IMR-90 (cell line): ENCODE measurements at regions of chr2 and their contacts with region 1.

Region 1: GRCh38 chr2:217713395-217714286 is 289.2 kb downstream of the TNS1 start:
- DNase-seq: peak; percentile 72
- ATAC-seq: peak; percentile 83
- H3K4me3 ChIP-seq: no peak overlapping the region
- H3K27ac ChIP-seq: peak overlapping the region; percentile 93
- H3K4me1 ChIP-seq: peaks cover 35% of the 10 kb centered on the region
- H3K27me3 ChIP-seq: no peaks in the 10 kb centered on the region
- CTCF ChIP-seq: peak; percentile 97
- POLR2A ChIP-seq: peak; percentile 54; the same call in 1 of the 2 replicates
- RAD21 ChIP-seq: peak; percentile 99

Region 2: GRCh38 chr2:216519154-216519762 is 1194.4 kb before region 1 on chr2:
- CTCF ChIA-PET with region 1: interaction called, 3 read pairs
- POLR2A ChIA-PET with region 1: no interaction called
- dilution Hi-C with region 1: no loop called
- in situ Hi-C with region 1: loop called (anchors 10 kb)
- intact Hi-C with region 1: loop called (anchors 5 kb)
- DNase-seq: peak; percentile 89
- ATAC-seq: peak; percentile 85
- H3K4me3 ChIP-seq: no peak overlapping the region
- H3K27ac ChIP-seq: no peak overlapping the region
- H3K4me1 ChIP-seq: peaks cover 7% of the 10 kb centered on the region
- H3K27me3 ChIP-seq: no peaks in the 10 kb centered on the region
- CTCF ChIP-seq: peak; percentile 80
- POLR2A ChIP-seq: no peak
- RAD21 ChIP-seq: peak; percentile 86

Region 3: DNA sequence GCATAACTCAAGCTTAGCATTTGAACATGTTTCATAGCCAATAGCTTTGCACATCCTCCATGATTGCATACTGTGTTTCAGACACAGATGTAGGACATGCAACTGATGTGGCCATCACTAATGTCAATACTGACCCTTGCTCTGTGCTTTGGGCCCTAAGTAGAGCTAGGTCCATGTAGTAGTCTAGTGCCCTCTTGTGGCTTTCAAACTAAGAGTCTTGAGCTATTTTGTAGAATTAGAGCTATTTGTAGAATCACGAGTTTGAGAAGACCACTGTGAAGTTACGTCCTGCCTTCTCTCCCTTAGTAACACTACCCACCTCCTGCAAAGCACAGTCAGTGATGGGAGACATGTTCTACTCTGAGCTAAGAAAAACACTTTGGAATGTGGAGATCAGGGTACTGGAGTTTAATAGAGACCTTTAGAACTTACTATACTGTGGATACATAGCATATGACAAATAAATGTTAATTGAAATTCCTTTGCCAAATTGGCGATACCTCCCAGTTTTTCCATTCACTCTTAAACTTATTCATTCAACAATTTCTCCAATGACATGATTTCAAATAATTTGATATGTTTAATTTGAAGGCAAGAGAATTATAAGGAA is 547.3 kb before region 1 on chr2:
- CTCF ChIA-PET with region 1: no interaction called
- POLR2A ChIA-PET with region 1: no interaction called
- dilution Hi-C with region 1: no loop called
- in situ Hi-C with region 1: loop called (anchors 25 kb)
- intact Hi-C with region 1: loop called (anchors 1 kb)
- DNase-seq: peak; percentile 73
- ATAC-seq: peak; percentile 49
- H3K4me3 ChIP-seq: no peak overlapping the region
- H3K27ac ChIP-seq: peak overlapping the region; percentile 65
- H3K4me1 ChIP-seq: peaks cover 19% of the 10 kb centered on the region
- H3K27me3 ChIP-seq: no peaks in the 10 kb centered on the region
- CTCF ChIP-seq: peak; percentile 66
- POLR2A ChIP-seq: no peak
- RAD21 ChIP-seq: peak; percentile 85

Region 4: GRCh38 chr2:217277646-217278398 is 435.8 kb before region 1 on chr2:
- CTCF ChIA-PET with region 1: interaction called, 4 read pairs
- POLR2A ChIA-PET with region 1: no interaction called
- dilution Hi-C with region 1: no loop called
- in situ Hi-C with region 1: no loop called
- intact Hi-C with region 1: loop called (anchors 2 kb)
- DNase-seq: peak; percentile 100
- ATAC-seq: peak; percentile 77
- H3K4me3 ChIP-seq: peak overlapping the region; percentile 22; the same call in 1 of the 2 replicates
- H3K27ac ChIP-seq: peak overlapping the region; percentile 91
- H3K4me1 ChIP-seq: peaks cover 13% of the 10 kb centered on the region
- H3K27me3 ChIP-seq: no peaks in the 10 kb centered on the region
- CTCF ChIP-seq: no peak
- POLR2A ChIP-seq: peak; percentile 50; the same call in 1 of the 2 replicates
- RAD21 ChIP-seq: peak; percentile 20; the same call in 1 of the 2 replicates

Region 5: DNA sequence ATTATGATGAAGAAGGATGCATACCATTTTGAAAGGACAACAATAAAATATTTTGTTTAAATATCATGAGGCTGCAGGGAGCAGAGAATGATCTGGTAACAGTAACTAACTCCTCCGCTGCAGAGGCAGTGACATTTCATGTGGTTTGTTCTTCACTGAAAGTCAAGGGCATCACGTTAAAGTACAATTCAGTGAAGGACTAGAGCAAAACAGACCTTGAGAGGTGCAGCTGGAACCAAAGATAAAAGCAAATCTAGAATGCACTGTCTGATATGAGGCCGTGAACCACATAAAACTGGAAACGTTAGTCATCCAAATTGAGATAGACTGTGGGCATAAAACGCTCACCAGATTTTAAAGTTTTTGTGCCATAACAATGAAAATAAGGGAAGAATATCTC is 330.8 kb before region 1 on chr2:
- CTCF ChIA-PET with region 1: no interaction called
- POLR2A ChIA-PET with region 1: no interaction called
- dilution Hi-C with region 1: no loop called
- in situ Hi-C with region 1: no loop called
- intact Hi-C with region 1: loop called (anchors 5 kb)
- DNase-seq: no peak
- ATAC-seq: no peak
- H3K4me3 ChIP-seq: no peak overlapping the region
- H3K27ac ChIP-seq: peak overlapping the region; percentile 79
- H3K4me1 ChIP-seq: peaks cover 20% of the 10 kb centered on the region
- H3K27me3 ChIP-seq: no peaks in the 10 kb centered on the region
- CTCF ChIP-seq: no peak
- POLR2A ChIP-seq: no peak
- RAD21 ChIP-seq: no peak

Region 6: GRCh38 chr2:217650716-217651360 is 62.8 kb before region 1 on chr2:
- CTCF ChIA-PET with region 1: interaction called, 20 read pairs
- POLR2A ChIA-PET with region 1: interaction called, 3 read pairs
- dilution Hi-C with region 1: no loop called
- in situ Hi-C with region 1: no loop called
- intact Hi-C with region 1: loop called (anchors 1 kb)
- DNase-seq: peak; percentile 66
- ATAC-seq: peak; percentile 68
- H3K4me3 ChIP-seq: no peak overlapping the region
- H3K27ac ChIP-seq: no peak overlapping the region
- H3K4me1 ChIP-seq: peaks cover 9% of the 10 kb centered on the region
- H3K27me3 ChIP-seq: no peaks in the 10 kb centered on the region
- CTCF ChIP-seq: peak; percentile 69
- POLR2A ChIP-seq: no peak
- RAD21 ChIP-seq: peak; percentile 67

Region 7: GRCh38 chr2:218063486-218063885 is 349.8 kb after region 1 on chr2:
- CTCF ChIA-PET with region 1: no interaction called
- POLR2A ChIA-PET with region 1: no interaction called
- dilution Hi-C with region 1: no loop called
- in situ Hi-C with region 1: no loop called
- intact Hi-C with region 1: no loop called
- DNase-seq: no peak
- ATAC-seq: no peak
- H3K4me3 ChIP-seq: no peak overlapping the region
- H3K27ac ChIP-seq: no peak overlapping the region
- H3K4me1 ChIP-seq: no peaks in the 10 kb centered on the region
- H3K27me3 ChIP-seq: peaks cover 74% of the 10 kb centered on the region
- CTCF ChIP-seq: no peak
- POLR2A ChIP-seq: no peak
- RAD21 ChIP-seq: no peak

Region 8: GRCh38 chr2:218194880-218195279 is 481.2 kb after region 1 on chr2:
- CTCF ChIA-PET with region 1: no interaction called
- POLR2A ChIA-PET with region 1: no interaction called
- dilution Hi-C with region 1: no loop called
- in situ Hi-C with region 1: no loop called
- intact Hi-C with region 1: no loop called
- DNase-seq: no peak
- ATAC-seq: no peak
- H3K4me3 ChIP-seq: no peak overlapping the region
- H3K27ac ChIP-seq: no peak overlapping the region
- H3K4me1 ChIP-seq: no peaks in the 10 kb centered on the region
- H3K27me3 ChIP-seq: peaks cover 19% of the 10 kb centered on the region
- CTCF ChIP-seq: no peak
- POLR2A ChIP-seq: no peak
- RAD21 ChIP-seq: no peak